Activated CD4-positive, alpha-beta memory T cell treated with anti-CD3 and anti-CD28 coated beads for 36 hours (primary cell): ENCODE measurements at regions of chr15 and their contacts with region 1.

Region 1: DNA sequence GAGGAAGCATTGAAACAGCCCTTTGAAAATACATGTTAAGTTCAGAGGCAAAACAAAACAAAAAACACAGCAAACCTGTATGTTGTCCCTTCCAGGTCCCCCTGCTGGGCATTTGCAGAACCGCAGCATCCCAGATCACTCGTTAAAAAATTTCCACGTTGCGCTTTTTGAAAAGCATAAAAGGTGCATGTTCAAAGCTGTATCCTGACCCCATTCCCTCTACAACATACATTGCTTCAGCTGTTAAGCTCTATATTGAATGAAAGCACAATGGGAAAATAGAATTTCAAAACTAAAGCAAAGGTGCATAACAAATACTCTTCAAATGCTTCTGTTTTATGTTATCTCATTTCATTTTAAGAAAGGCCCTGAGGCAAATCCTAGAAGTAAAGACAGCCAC is 328.3 kb downstream of the THSD4 start:
- DNase-seq: peak; percentile 48
- H3K4me3 Mint-ChIP-seq: no peak overlapping the region
- H3K27ac Mint-ChIP-seq: no peak overlapping the region
- H3K4me1 Mint-ChIP-seq: no peaks in the 10 kb centered on the region
- H3K27me3 Mint-ChIP-seq: peaks cover 3% of the 10 kb centered on the region

Region 2: GRCh38 chr15:70826634-70827033 is 616.9 kb before region 1 on chr15:
- CTCF ChIA-PET with region 1: interaction called, 8 read pairs
- POLR2A ChIA-PET with region 1: no interaction called
- intact Hi-C with region 1: loop called (anchors 5 kb)
- DNase-seq: no peak
- H3K4me3 Mint-ChIP-seq: no peak overlapping the region
- H3K27ac Mint-ChIP-seq: no peak overlapping the region
- H3K4me1 Mint-ChIP-seq: no peaks in the 10 kb centered on the region
- H3K27me3 Mint-ChIP-seq: peaks cover 10% of the 10 kb centered on the region

Region 3: DNA sequence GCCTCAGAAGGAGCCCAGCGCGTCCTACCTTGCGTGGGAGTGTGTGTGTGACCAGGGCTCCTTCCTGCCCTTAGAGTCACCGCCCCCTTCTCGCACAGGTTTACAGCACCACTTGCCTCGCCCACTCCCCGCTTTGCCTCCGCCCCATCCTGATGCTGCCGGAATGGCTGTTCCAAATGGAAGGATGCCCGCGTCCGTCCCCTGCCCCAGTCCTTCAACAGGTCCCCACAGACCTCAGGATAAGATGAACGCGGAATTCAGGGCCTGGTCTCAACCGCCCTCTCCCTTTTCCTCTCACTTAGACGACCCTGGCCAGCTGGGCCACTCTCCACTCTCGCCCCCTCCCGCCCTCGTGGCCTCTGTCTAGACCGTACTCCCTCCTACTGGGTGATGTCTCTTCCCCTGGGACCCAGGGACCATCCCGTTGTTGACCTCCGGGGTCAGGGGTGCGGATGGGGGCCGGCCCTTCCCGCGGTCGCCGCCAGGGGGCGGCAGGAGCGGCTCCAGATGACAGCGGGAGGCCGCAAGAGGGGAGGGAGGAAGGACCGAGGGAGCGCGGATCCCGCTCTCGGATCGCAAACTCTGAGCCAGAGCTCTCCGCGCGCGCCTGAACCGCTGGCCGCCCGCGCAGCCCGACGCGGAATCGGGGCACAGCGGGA is 328.5 kb before region 1 on chr15 and contains the start of gene THSD4:
- CTCF ChIA-PET with region 1: interaction called, 12 read pairs
- POLR2A ChIA-PET with region 1: no interaction called
- intact Hi-C with region 1: loop called (anchors 1 kb)
- DNase-seq: peak; percentile 74
- H3K4me3 Mint-ChIP-seq: peak within 1 kb of the TSS; percentile 69
- H3K27ac Mint-ChIP-seq: no peak within 1 kb of the TSS
- H3K4me1 Mint-ChIP-seq: peaks cover 6% of the 10 kb centered on the region
- H3K27me3 Mint-ChIP-seq: peaks cover 50% of the 10 kb centered on the region
- total RNA-seq, gene THSD4: not detected

Region 4: GRCh38 chr15:71386448-71387236 is 56.9 kb before region 1 on chr15:
- CTCF ChIA-PET with region 1: interaction called, 20 read pairs
- POLR2A ChIA-PET with region 1: no interaction called
- intact Hi-C with region 1: loop called (anchors 5 kb)
- DNase-seq: no peak
- H3K4me3 Mint-ChIP-seq: no peak overlapping the region
- H3K27ac Mint-ChIP-seq: no peak overlapping the region
- H3K4me1 Mint-ChIP-seq: peaks cover 7% of the 10 kb centered on the region
- H3K27me3 Mint-ChIP-seq: peaks cover 12% of the 10 kb centered on the region